Activated T-helper 2 cell treated with anti-CD3 and anti-CD28 coated beads, Interferon-gamma antibody, Interleukin-2, Interleukin-4, amounts not matched to agents 10 μg/mL and 5 μg/mL and 100 μg/mL, durations not matched to agents 14 hours and 24 hours and 36 hours (primary cell): ENCODE measurements at regions of chr19 and their contacts with region 1.

Region 1: GRCh38 chr19:55339048-55339888 is at the start of gene KMT5C:
- DNase-seq: peak; percentile 100
- H3K4me3 Mint-ChIP-seq: peak within 1 kb of the TSS; percentile 93
- H3K27ac Mint-ChIP-seq: peak within 1 kb of the TSS; percentile 95
- H3K4me1 Mint-ChIP-seq: peaks cover 14% of the 10 kb centered on the region
- H3K27me3 Mint-ChIP-seq: peaks cover 2% of the 10 kb centered on the region
- total RNA-seq, gene KMT5C: 34.3 and 35.3 TPM in 2 replicates

Region 2: DNA sequence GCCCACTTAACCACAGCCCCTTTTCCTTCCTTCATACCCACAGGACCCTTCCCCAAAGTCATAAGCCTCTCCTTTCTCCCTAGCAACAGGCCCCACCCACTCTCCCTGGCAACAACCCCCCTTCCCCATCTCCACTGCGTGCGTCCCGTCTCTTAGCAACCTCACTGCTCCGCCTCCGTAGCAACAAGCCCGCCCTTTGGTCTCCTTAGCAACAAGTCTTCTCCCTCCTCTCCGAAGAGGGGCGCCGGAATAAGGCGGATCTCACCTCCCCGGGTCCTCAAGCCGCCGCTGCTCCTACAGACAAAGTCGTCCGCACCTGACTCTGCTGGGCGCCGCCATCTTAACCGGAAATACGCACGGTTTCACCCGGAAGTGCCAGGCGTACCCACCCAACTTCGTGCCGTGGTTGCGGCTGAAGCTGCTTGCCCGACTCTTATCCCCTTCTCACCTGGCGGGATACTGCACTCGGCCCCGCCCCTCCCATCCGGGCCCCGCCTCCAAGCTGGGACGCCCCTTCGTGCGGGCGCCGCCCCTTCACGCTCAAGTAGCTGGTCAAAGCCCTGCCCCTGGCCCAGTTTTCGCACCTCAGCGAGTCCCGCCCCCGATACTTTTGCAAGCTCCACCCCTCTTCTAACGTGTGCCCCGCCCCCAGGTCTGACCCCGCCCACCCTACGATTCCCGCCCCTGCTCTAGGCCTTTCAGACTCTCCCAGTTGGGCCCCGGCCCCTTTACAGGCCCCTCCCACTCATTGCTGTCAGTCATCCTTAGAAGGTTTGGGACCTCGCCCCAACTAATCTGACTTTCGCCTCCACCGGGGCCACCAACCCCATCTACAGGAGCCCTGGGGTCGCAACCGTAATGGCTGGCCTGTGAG is 59.3 kb before region 1 on chr19 and contains the start of gene HSPBP1:
- intact Hi-C with region 1: loop called (anchors 1 kb)
- DNase-seq: peak; percentile 96
- H3K4me3 Mint-ChIP-seq: peak within 1 kb of the TSS; percentile 100
- H3K27ac Mint-ChIP-seq: peak within 1 kb of the TSS; percentile 97
- H3K4me1 Mint-ChIP-seq: peaks cover 16% of the 10 kb centered on the region
- H3K27me3 Mint-ChIP-seq: peaks cover 3% of the 10 kb centered on the region
- total RNA-seq, gene HSPBP1: 59.0 and 59.3 TPM in 2 replicates

Region 3: GRCh38 chr19:55301459-55302317 is 37.6 kb before region 1 on chr19:
- intact Hi-C with region 1: loop called (anchors 1 kb)
- DNase-seq: peak; percentile 91
- H3K4me3 Mint-ChIP-seq: peak overlapping the region; percentile 81
- H3K27ac Mint-ChIP-seq: peak overlapping the region; percentile 75
- H3K4me1 Mint-ChIP-seq: peaks cover 4% of the 10 kb centered on the region
- H3K27me3 Mint-ChIP-seq: no peaks in the 10 kb centered on the region

Region 4: DNA sequence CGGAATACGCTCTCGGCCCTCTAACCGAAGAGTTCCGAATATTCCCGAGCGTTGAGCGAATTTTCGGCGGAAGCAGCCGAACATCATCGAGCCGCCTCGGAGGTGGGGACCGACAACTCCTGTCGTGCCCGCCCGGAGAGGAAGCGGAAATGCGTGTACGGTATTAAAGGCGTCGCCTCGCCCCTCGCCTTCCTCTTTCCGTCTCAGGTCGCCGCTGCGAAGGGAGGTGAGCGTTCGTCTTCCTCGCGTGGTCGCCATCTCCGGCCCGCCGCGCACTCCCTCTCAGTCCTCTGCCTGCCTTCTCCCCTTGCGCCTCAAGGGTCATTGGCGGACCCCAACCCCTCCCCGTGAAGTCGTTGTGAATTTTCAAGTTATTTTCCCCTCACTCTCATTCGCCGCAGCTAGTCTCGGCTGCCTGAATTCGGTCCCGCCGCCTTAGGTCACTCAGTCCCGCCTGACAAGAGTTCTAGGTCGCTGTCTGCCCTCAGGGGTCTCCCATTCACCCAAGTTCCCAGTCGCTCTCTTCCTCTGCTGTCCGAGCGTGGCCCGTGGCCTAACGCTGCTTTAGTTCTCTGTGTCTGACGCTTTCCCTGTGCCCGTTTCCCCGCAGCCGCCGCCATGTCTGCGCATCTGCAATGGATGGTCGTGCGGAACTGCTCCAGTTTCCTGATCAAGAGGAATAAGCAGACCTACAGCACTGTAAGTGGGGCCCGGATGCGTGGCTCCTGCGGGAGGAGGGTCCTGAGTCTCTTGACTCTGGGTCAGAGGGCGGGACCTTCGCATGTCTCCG is 46.7 kb after region 1 on chr19 and contains the start of gene RPL28:
- intact Hi-C with region 1: loop called (anchors 1 kb)
- DNase-seq: peak; percentile 99
- H3K4me3 Mint-ChIP-seq: peak within 1 kb of the TSS; percentile 100
- H3K27ac Mint-ChIP-seq: peak within 1 kb of the TSS; percentile 94
- H3K4me1 Mint-ChIP-seq: peaks cover 44% of the 10 kb centered on the region
- H3K27me3 Mint-ChIP-seq: no peaks in the 10 kb centered on the region
- total RNA-seq, gene RPL28: 2,206 and 2,207 TPM in 2 replicates

Region 5: DNA sequence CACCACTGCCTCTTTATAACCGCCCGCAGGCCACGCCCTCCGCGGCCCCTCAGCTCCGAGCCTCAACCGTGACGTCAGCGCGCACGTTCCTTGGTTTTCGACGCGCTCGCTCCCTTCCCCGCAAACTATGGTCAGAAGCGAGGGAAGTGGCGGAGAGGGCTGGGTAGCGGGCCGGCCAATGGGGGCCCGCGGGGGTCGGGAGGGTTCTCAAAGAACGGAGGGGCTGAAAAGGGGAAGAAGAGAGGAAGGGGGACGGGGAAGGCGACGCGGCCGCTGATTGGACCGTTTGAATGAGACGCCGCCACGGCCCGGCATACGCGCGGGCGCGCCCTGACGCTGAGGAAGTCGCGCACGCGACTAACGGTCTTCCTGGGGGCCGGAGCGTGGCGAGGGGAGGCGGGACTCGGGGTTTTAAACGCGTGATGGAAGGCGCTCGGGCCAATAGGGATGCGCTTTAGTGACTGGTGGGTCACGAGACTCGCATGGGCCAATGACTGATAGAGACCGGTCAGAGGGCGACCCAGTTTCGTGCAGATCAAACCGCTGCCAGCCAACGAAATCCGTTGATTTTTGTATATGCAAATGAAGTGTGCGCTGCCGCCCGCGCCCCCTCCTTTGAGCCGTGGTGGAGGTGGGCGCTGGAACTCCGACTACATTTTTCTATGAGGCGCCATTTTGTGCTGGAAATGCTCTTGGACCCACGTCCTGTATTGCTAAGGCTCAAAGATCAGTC is 68.7 kb after region 1 on chr19:
- intact Hi-C with region 1: loop called (anchors 1 kb)
- DNase-seq: peak; percentile 98
- H3K4me3 Mint-ChIP-seq: peak overlapping the region; percentile 93
- H3K27ac Mint-ChIP-seq: peak overlapping the region; percentile 97
- H3K4me1 Mint-ChIP-seq: peaks cover 22% of the 10 kb centered on the region
- H3K27me3 Mint-ChIP-seq: peaks cover 4% of the 10 kb centered on the region